GM12878 (cell line): ENCODE measurements at regions of chr16 and their contacts with region 1.

Region 1: DNA sequence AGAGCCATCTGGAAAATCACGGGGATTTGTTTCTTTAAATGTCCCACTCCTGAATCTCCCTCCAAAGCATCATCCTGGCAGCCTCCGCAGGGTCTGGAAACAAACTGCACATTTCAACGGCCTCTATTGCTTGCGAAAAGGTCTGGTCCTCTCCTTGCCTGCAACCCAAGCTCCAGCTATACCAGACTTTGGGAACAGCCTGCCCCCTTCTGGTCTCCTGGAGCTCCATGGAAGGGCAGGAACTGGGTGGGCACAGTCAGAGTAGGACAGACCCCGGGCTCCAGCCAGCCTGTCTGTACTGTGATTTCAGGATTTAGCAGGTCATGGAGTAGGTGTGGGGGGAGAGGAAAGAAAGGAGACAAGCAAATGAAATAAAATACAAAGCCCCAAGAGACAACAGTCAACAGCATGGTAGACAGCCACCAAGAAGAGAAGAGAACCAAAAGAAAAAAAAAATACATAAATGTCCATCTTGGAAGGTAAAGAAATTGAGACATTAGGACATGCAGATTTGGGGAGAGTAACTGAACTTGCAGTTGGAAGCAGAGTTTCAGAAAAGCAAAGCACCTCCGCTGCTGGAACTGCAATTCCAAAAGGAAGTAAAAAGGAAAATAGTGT is 2.7 kb downstream of the XYLT1 start:
- DNase-seq: no peak
- ATAC-seq: peak; percentile 65
- H3K4me3 ChIP-seq: peak overlapping the region; percentile 68; the same call in 1 of the 2 replicates
- H3K27ac ChIP-seq: no peak overlapping the region
- H3K4me1 ChIP-seq: peaks cover 17% of the 10 kb centered on the region
- H3K27me3 ChIP-seq: peaks cover 0 to 3% of the 10 kb centered on the region in 2 experiments; a peak in 3 of 4 replicates
- CTCF ChIP-seq: peak; percentile 72 to 76 (median 72)
- EP300 ChIP-seq: no peak
- POLR2A ChIP-seq: no peak
- RAD21 ChIP-seq: peak; percentile 84

Region 2: DNA sequence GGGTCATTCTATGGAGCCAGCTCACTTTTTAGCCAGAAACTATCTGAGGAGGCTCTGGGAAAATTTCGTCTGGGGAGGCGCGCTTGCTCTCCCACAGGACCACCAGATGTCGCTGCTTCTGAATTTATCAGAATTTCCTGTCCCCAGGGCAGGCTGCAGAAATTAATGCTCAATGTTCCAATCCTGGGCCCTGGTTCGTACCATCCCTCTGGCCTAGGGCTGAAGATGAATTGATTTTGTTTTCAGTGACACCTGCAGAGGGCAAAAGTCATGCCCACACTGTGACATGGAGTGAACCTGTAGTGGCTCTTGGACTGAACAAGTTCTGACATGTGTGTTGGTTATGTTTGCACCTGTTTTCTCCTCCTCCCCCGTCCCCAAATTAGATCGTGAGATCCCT is 606.5 kb before region 1 on chr16:
- CTCF ChIA-PET with region 1: interaction called, 29 read pairs
- POLR2A ChIA-PET with region 1: no interaction called
- RAD21 ChIA-PET with region 1: interaction called, 27 read pairs
- SMC1A ChIA-PET with region 1: interaction called, 18 read pairs
- in situ Hi-C with region 1: no loop called
- intact Hi-C with region 1: loop called (anchors 2 kb)
- DNase-seq: peak; percentile 46
- ATAC-seq: peak; percentile 94
- H3K4me3 ChIP-seq: no peak overlapping the region
- H3K27ac ChIP-seq: no peak overlapping the region
- H3K4me1 ChIP-seq: peaks cover 4% of the 10 kb centered on the region; the same call in 1 of the 2 replicates
- H3K27me3 ChIP-seq: no peaks in the 10 kb centered on the region; a peak in 1 of 4 replicates
- CTCF ChIP-seq: peak; percentile 70 to 87 (median 86)
- EP300 ChIP-seq: no peak
- POLR2A ChIP-seq: no peak
- RAD21 ChIP-seq: peak; percentile 83

Region 3: DNA sequence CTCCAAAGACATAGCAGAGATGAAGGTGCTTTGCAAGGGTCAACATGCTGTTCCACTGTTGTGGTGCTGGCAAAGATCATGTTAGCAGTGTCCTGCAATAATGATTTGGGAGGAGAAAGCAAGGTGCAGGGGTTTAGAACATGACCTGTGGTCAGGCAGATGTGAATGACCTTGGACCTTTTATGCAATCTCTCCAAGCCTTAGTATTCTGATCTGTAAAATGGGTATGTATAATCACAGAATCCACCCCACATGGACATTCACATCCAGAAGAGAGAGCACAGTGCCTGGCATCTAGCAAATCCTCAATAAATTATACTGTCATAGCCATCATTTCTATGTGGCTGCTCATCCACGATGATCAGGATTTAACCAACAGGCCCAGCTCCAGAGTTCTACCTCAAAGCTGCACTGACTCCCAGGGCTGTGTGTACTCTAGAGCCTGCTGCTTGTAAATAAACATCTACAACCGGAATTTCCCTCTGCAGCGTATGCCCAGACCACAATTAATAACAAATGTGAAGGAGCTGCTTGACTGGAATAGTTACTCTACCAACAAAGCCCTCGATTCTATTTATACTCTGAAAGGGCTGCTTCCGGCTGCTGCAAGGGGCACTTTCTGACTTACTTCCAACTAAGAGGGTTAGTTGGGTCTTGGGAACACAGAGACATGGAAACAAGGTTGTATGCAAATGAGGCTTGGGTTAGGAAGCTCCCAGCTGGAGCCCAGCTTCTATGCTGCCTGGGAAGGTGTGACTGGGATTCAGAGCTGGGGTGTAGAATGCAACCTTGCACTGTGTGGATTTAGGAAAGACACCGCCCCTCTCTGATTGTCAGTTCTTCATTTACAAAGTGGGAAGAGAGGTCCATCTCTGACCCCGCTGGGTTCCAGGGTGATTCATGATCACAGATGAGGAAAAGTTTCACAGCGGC is 262.5 kb before region 1 on chr16:
- CTCF ChIA-PET with region 1: interaction called, 5 read pairs
- POLR2A ChIA-PET with region 1: no interaction called
- RAD21 ChIA-PET with region 1: interaction called, 15 read pairs
- SMC1A ChIA-PET with region 1: interaction called, 19 read pairs
- in situ Hi-C with region 1: no loop called
- intact Hi-C with region 1: loop called (anchors 5 kb)
- DNase-seq: no peak
- ATAC-seq: no peak; the same call in 2 of the 3 replicates
- H3K4me3 ChIP-seq: no peak overlapping the region
- H3K27ac ChIP-seq: no peak overlapping the region
- H3K4me1 ChIP-seq: no peaks in the 10 kb centered on the region
- H3K27me3 ChIP-seq: no peaks in the 10 kb centered on the region
- CTCF ChIP-seq: no peak
- EP300 ChIP-seq: no peak
- POLR2A ChIP-seq: no peak
- RAD21 ChIP-seq: no peak

Region 4: GRCh38 chr16:17258848-17259713 is 209.0 kb before region 1 on chr16:
- CTCF ChIA-PET with region 1: interaction called, 57 read pairs
- POLR2A ChIA-PET with region 1: no interaction called
- RAD21 ChIA-PET with region 1: interaction called, 51 read pairs
- SMC1A ChIA-PET with region 1: interaction called, 49 read pairs
- in situ Hi-C with region 1: loop called (anchors 5 kb)
- intact Hi-C with region 1: loop called (anchors 5 kb)
- DNase-seq: peak; percentile 79
- ATAC-seq: peak; percentile 88
- H3K4me3 ChIP-seq: peak overlapping the region; percentile 47
- H3K27ac ChIP-seq: peak overlapping the region; percentile 93
- H3K4me1 ChIP-seq: peaks cover 33% of the 10 kb centered on the region
- H3K27me3 ChIP-seq: no peaks in the 10 kb centered on the region
- CTCF ChIP-seq: peak; percentile 64 to 75 (median 68)
- EP300 ChIP-seq: peak; percentile 22 to 83; a peak in 2 of 4 replicates
- POLR2A ChIP-seq: peak; percentile 62
- RAD21 ChIP-seq: peak; percentile 68

Region 5: GRCh38 chr16:17301593-17302135 is 166.4 kb before region 1 on chr16:
- CTCF ChIA-PET with region 1: interaction called, 85 read pairs
- POLR2A ChIA-PET with region 1: interaction called, 5 read pairs
- RAD21 ChIA-PET with region 1: interaction called, 109 read pairs
- SMC1A ChIA-PET with region 1: interaction called, 119 read pairs
- in situ Hi-C with region 1: loop called (anchors 5 kb)
- intact Hi-C with region 1: loop called (anchors 2 kb)
- DNase-seq: peak; percentile 98
- ATAC-seq: peak; percentile 91
- H3K4me3 ChIP-seq: no peak overlapping the region
- H3K27ac ChIP-seq: no peak overlapping the region; the same call in none of the 2 replicates
- H3K4me1 ChIP-seq: peaks cover 44% of the 10 kb centered on the region
- H3K27me3 ChIP-seq: no peaks in the 10 kb centered on the region
- CTCF ChIP-seq: no peak
- EP300 ChIP-seq: peak; percentile 87 to 97
- POLR2A ChIP-seq: no peak
- RAD21 ChIP-seq: peak; percentile 5; the same call in 1 of the 2 replicates

Region 6: GRCh38 chr16:17369421-17370222 is 98.4 kb before region 1 on chr16:
- CTCF ChIA-PET with region 1: interaction called, 27 read pairs
- POLR2A ChIA-PET with region 1: interaction called, 5 read pairs
- RAD21 ChIA-PET with region 1: interaction called, 43 read pairs
- SMC1A ChIA-PET with region 1: interaction called, 37 read pairs
- in situ Hi-C with region 1: no loop called
- intact Hi-C with region 1: loop called (anchors 5 kb)
- DNase-seq: peak; percentile 53
- ATAC-seq: peak; percentile 94
- H3K4me3 ChIP-seq: peak overlapping the region; percentile 41; the same call in 1 of the 2 replicates
- H3K27ac ChIP-seq: peak overlapping the region; percentile 36
- H3K4me1 ChIP-seq: peaks cover 52% of the 10 kb centered on the region
- H3K27me3 ChIP-seq: no peaks in the 10 kb centered on the region
- CTCF ChIP-seq: no peak
- EP300 ChIP-seq: peak in 1 of 2 experiments; percentile 49; a peak in 1 of 4 replicates
- POLR2A ChIP-seq: peak; percentile 50
- RAD21 ChIP-seq: no peak

Region 7: GRCh38 chr16:17416461-17417311 is 51.3 kb before region 1 on chr16:
- CTCF ChIA-PET with region 1: interaction called, 67 read pairs
- POLR2A ChIA-PET with region 1: interaction called, 25 read pairs
- RAD21 ChIA-PET with region 1: interaction called, 111 read pairs
- SMC1A ChIA-PET with region 1: interaction called, 110 read pairs
- in situ Hi-C with region 1: no loop called
- intact Hi-C with region 1: loop called (anchors 2 kb)
- DNase-seq: peak; percentile 89
- ATAC-seq: peak; percentile 95
- H3K4me3 ChIP-seq: peak overlapping the region; percentile 34; the same call in 1 of the 2 replicates
- H3K27ac ChIP-seq: peak overlapping the region; percentile 90
- H3K4me1 ChIP-seq: peaks cover 51% of the 10 kb centered on the region
- H3K27me3 ChIP-seq: no peaks in the 10 kb centered on the region
- CTCF ChIP-seq: peak; percentile 23 to 38 (median 26); a peak in 5 of 6 replicates
- EP300 ChIP-seq: peak; percentile 83 to 90
- POLR2A ChIP-seq: peak; percentile 73
- RAD21 ChIP-seq: peak; percentile 59

Region 8: GRCh38 chr16:17493012-17493411 is 25.0 kb after region 1 on chr16:
- CTCF ChIA-PET with region 1: no interaction called
- POLR2A ChIA-PET with region 1: no interaction called
- RAD21 ChIA-PET with region 1: no interaction called
- SMC1A ChIA-PET with region 1: no interaction called
- in situ Hi-C with region 1: no loop called
- intact Hi-C with region 1: no loop called
- DNase-seq: no peak
- ATAC-seq: no peak
- H3K4me3 ChIP-seq: no peak overlapping the region
- H3K27ac ChIP-seq: no peak overlapping the region
- H3K4me1 ChIP-seq: no peaks in the 10 kb centered on the region
- H3K27me3 ChIP-seq: no peaks in the 10 kb centered on the region
- CTCF ChIP-seq: no peak
- EP300 ChIP-seq: no peak
- POLR2A ChIP-seq: no peak
- RAD21 ChIP-seq: no peak